Pancreas (tissue), 10 donors: ENCODE measurements at regions of chr11 and their contacts with region 1.

Region 1: GRCh38 chr11:65988791-65989592 is 13.0 kb downstream of the EIF1AD start:
- DNase-seq: peak in 5 of 6 donors; percentile 69 to 95 (median 84)
- ATAC-seq: peak; percentile 97 to 100 (median 100)
- H3K4me3 ChIP-seq: no peak overlapping the region
- H3K27ac ChIP-seq: no peak overlapping the region
- H3K4me1 ChIP-seq: no peaks in the 10 kb centered on the region
- H3K27me3 ChIP-seq: no peaks in the 10 kb centered on the region
- CTCF ChIP-seq: peak; percentile 56 to 91 (median 84)

Region 2: DNA sequence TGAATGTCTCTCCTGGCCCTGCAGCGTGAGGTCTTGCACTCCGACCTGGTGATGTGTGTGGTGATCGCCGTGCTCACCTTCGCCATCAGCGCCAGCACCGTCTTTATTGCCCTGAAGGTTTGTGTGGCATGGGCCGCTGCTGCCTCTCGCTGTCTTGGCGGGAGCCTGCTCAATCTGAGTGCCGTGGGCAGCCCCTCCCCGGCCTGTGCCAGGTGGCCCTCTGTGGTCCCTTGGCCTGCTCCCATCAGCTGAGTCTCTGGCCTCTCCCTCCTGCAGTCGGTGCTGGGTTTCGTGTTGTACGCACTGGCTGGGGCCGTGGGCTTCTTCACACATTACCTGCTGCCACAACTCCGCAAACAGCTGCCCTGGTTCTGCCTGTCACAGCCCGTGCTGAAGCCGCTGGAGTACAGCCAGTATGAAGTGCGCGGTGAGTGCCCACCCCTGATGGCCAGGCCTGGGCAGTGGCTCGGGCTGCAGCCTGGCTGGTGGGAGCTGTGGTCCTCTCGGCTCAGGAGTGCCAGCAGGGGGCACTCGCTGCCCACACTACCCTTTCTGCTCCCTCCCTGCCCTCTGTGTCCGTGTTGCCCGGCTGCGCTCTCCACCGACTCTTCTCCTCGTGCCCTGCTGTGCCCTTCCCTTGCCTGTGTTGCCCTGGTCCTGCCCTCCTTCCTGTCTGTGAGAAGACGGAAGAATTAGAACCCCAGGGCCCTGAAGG is 363.2 kb before region 1 on chr11:
- intact Hi-C with region 1: loop called in 1 of 3 experiments (anchors 10 kb)
- DNase-seq: peak in 3 of 6 donors; percentile 38 to 73 (median 52)
- ATAC-seq: peak in 3 of 4 donors; percentile 74 to 91 (median 85)
- H3K4me3 ChIP-seq: no peak overlapping the region
- H3K27ac ChIP-seq: no peak overlapping the region
- H3K4me1 ChIP-seq: no peaks in the 10 kb centered on the region
- H3K27me3 ChIP-seq: no peaks in the 10 kb centered on the region
- CTCF ChIP-seq: peak; percentile 8 to 34 (median 30)

Region 3: DNA sequence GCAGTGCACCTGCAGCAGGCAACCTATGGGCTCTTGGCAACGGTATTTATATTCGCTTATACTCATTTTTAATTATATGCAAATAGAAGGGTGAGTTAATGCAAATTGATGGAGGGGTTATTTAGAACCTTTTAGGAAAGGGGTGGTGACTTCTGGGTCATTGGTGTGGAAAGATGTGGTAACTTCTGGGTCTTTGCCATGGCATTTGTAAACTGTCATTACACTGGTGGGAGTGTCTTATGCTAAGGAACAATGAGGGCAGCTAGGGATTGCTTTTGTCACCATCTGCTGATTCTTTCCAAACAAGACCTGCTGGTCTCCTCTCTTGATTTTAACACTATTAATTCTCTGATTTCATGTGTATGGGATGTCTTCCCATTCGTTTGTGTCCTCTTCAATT is 288.6 kb before region 1 on chr11:
- intact Hi-C with region 1: loop called in 2 of 3 experiments (anchors 5 to 10 kb)
- DNase-seq: no peak
- ATAC-seq: no peak
- H3K4me3 ChIP-seq: no peak overlapping the region
- H3K27ac ChIP-seq: no peak overlapping the region
- H3K4me1 ChIP-seq: peaks cover 0 to 4% (median 3%) of the 10 kb centered on the region in 3 donors
- H3K27me3 ChIP-seq: no peaks in the 10 kb centered on the region
- CTCF ChIP-seq: no peak

Region 4: DNA sequence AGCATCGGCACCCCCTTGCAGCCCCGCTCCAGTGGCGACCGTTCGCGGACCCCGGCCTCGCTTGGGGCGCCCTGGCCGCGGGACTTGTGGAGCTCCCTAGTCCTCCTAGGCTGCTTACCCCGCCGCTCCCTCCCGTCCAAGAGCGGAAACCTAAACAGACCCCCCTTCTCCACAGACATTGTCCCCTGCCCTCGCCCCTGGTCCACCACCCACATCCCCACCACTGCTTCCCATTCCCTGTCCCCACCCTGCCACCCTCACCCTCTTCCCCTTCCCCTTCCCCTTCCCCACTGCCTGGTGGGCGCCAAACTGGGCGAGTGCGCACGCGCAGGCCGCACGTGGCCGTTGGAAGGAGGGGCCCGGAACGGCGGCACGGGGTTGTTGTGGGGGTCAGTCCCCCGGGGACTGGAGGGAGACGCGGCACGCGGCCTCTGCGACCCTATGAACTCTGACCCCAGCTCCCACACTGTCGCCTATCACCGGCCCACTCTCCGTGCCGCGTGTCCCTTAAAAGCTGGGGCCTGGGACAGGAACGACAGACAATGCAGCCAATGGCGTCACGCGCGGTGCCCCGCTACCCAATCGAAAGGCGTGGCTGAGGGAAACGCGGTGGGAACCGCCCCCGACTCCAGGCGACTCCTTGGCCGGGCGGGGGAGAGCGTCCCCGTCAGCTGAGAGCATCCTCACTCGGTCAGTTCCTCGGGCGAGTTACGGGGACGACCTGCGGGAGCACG is 155.5 kb before region 1 on chr11 and contains the start of gene SNX32:
- intact Hi-C with region 1: no loop called
- DNase-seq: peak; percentile 92 to 98 (median 96)
- ATAC-seq: peak; percentile 100
- H3K4me3 ChIP-seq: peak within 1 kb of the TSS; percentile 33 to 58 (median 40)
- H3K27ac ChIP-seq: no peak within 1 kb of the TSS
- H3K4me1 ChIP-seq: no peaks in the 10 kb centered on the region
- H3K27me3 ChIP-seq: no peaks in the 10 kb centered on the region
- CTCF ChIP-seq: no peak
- total RNA-seq, gene SNX32: 0.12 to 0.75 (median 0.43) TPM in 4 of 6 donors, not detected in the others

Region 5: DNA sequence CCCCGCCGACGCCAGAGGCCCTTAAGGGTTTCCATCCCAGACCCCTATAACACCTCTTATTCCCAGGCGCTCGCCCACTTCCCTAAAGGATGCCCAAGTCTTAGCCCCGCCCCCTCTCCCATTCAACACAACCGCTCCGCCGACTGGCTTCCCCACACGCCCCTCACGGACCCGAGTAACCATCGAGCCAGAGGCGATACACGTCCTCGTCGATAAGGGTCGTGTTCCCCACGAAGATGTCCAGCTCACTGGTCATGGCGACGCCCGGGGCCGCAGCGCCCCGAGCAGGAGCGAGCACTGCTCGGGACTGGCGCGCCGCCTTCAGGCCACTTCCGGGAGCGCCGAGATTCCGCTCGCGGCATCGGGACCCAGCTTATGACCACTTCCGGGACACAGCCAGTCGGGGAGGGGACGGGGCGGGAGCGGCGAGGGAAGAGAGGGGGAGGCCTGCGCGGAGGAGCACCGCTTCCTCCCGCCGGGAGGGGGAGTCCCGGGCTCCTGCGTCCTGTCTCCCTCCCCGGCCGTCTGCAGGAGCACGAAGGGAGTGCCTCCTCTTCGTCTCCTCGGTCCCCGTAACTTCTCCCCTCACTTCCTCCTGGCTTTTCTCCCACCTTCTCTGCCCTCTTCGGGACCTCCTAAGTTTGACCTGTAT is 100.7 kb before region 1 on chr11 and contains the start of gene FIBP:
- intact Hi-C with region 1: loop called in 2 of 3 experiments (anchors 5 kb)
- DNase-seq: peak; percentile 97 to 99 (median 98)
- ATAC-seq: peak; percentile 84 to 89 (median 85)
- H3K4me3 ChIP-seq: peak within 1 kb of the TSS; percentile 65 to 82 (median 66)
- H3K27ac ChIP-seq: peak within 1 kb of the TSS; percentile 63 to 93 (median 86)
- H3K4me1 ChIP-seq: peaks cover 7 to 31% (median 11%) of the 10 kb centered on the region in 3 donors
- H3K27me3 ChIP-seq: no peaks in the 10 kb centered on the region
- CTCF ChIP-seq: peak; percentile 75 to 90 (median 90)
- total RNA-seq, gene FIBP: 18.0 to 28.5 (median 22.7) TPM

Region 6: DNA sequence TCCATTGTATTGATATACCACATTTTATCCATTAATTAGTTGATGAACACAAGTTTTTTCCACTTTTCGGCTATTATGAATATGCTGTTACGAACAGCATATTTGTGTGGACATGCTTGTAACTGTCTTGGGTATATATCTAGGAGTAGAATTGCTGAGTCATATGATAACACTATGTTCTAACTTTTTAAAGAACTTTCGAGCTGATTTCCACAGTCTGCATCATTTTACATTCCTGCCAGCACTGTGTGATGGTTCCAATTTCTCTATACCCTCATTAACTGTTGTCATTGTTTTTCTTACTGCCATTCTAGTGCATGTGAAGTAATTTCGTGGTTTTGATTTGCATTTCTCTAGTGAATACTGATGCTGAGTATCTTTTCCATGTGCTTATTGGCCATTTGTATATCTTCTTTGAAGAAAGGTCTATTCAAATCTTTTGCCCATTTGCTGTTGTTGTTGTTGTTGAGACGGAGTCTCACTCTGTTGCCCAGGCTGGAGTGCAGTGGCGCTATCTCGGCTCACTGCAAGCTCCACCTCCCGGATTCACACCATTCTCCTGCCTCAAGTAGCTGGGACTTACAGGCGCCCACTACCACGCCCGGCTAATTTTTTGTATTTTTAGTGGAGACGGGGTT is 846.9 kb after region 1 on chr11:
- intact Hi-C with region 1: no loop called
- DNase-seq: no peak
- ATAC-seq: no peak
- H3K4me3 ChIP-seq: no peak overlapping the region
- H3K27ac ChIP-seq: no peak overlapping the region
- H3K4me1 ChIP-seq: no peaks in the 10 kb centered on the region
- H3K27me3 ChIP-seq: no peaks in the 10 kb centered on the region
- CTCF ChIP-seq: no peak